ENCODE measurements at regions of chr9 and their contacts with region 1.

Region 1: GRCh38 chr9:14353222-14354056 is 39.5 kb upstream of the NFIB start:
- DNase-seq: peak; percentile 61
- H3K4me3 ChIP-seq: peak overlapping the region in 2 of 3 experiments; percentile 17 to 31
- H3K27ac ChIP-seq: no peak overlapping the region
- H3K4me1 ChIP-seq: peaks cover 41% of the 10 kb centered on the region
- H3K27me3 ChIP-seq: no peaks in the 10 kb centered on the region
- CTCF ChIP-seq: peak; percentile 78 to 95

Region 2: GRCh38 chr9:13450723-13451122 is 902.7 kb before region 1 on chr9:
- CTCF ChIA-PET with region 1: no interaction called
- dilution Hi-C with region 1: no loop called
- in situ Hi-C with region 1: no loop called
- intact Hi-C with region 1: loop called (anchors 2 kb)
- DNase-seq: peak; percentile 20
- H3K4me3 ChIP-seq: no peak overlapping the region
- H3K27ac ChIP-seq: no peak overlapping the region
- H3K4me1 ChIP-seq: no peaks in the 10 kb centered on the region
- H3K27me3 ChIP-seq: no peaks in the 10 kb centered on the region
- CTCF ChIP-seq: no peak

Region 3: DNA sequence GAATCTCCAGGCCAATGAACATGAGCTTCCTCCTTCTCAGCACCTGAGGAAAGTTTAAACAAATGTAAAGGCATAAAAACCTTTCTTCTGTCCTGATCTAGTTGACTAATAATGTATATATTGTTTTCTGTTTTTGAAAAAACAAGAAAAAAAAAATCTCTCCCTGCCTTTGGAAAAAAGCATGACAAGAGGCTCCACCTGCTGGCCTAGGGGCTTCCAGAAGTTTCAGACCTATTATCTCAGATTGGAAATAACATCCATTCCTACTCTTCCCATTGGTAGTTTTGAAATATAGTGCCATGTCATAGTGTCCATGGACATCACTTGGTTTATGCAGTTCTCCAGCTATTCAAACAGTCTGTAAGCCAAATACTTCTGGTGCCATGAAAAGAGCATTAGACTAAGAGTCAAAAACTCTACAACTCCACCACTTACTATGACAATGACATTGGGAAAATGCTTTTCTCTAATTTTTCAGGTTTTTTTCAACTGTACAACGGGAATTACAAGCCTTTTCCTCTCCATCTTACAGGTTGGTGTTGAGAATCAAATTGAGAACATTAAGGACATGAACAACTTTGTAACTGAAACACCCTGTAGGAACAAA is 664.3 kb before region 1 on chr9:
- CTCF ChIA-PET with region 1: no interaction called
- dilution Hi-C with region 1: no loop called
- in situ Hi-C with region 1: no loop called
- intact Hi-C with region 1: loop called (anchors 5 kb)
- DNase-seq: peak; percentile 8
- H3K4me3 ChIP-seq: no peak overlapping the region
- H3K27ac ChIP-seq: no peak overlapping the region
- H3K4me1 ChIP-seq: peaks cover 16% of the 10 kb centered on the region
- H3K27me3 ChIP-seq: no peaks in the 10 kb centered on the region
- CTCF ChIP-seq: peak; percentile 48 to 62

Region 4: DNA sequence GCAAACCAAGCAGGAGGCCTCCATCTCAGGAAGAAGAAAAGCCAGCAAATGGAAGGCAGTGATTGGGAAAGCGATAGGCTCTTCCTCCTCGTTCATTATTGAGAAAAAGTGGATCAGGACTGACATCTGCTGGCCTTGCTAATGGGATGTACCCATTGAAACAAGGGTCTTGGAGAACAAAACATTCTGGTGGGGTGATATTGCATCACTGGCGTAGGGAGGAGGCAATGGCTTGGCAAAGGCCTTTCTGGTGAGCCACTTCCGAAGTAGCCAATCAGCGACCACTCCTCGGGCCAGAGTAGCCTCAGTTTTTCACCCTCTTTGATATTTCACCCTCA is 47.2 kb after region 1 on chr9:
- CTCF ChIA-PET with region 1: no interaction called
- dilution Hi-C with region 1: no loop called
- in situ Hi-C with region 1: no loop called
- intact Hi-C with region 1: loop called (anchors 2 kb)
- DNase-seq: peak; percentile 77
- H3K4me3 ChIP-seq: peak overlapping the region in 1 of 3 experiments; percentile 31
- H3K27ac ChIP-seq: no peak overlapping the region
- H3K4me1 ChIP-seq: peaks cover 6% of the 10 kb centered on the region
- H3K27me3 ChIP-seq: peaks cover 5% of the 10 kb centered on the region
- CTCF ChIP-seq: peak; percentile 60 to 66

Measured in mammary epithelial cell (primary cell).